GM18951 (cell line): ENCODE measurements at regions of chr9 and their contacts with region 1.

Region 1: GRCh38 chr9:19379697-19380046 is 364 bp downstream of the RPS6 start:
- POLR2A ChIP-seq: no peak

Region 2: GRCh38 chr9:19085295-19085694 is 294.4 kb before region 1 on chr9:
- in situ Hi-C with region 1: no loop called
- POLR2A ChIP-seq: no peak

Region 3: DNA sequence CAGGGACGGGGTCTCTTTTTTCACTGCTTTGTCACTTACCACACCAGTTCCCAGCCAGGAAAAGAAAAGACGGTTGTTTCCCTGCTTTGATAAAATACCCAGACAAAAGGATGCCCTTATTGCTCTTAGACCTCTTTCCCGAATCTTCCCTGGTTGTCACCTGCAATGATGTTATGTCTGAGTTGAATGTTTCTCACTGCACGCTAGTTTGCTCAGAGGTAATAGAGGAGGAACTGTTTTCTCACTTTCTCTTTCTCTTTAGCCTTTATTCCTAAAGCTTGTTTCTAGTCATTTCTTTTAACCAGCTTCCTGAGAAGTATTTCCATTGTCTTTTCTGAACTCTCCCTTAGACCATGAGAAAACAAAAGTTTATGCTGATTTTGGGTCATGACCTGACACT is 62.1 kb after region 1 on chr9:
- in situ Hi-C with region 1: loop called (anchors 10 kb)
- POLR2A ChIP-seq: no peak